Transverse colon (tissue), 4 donors: ENCODE measurements at regions of chr6 and their contacts with region 1.

Region 1: DNA sequence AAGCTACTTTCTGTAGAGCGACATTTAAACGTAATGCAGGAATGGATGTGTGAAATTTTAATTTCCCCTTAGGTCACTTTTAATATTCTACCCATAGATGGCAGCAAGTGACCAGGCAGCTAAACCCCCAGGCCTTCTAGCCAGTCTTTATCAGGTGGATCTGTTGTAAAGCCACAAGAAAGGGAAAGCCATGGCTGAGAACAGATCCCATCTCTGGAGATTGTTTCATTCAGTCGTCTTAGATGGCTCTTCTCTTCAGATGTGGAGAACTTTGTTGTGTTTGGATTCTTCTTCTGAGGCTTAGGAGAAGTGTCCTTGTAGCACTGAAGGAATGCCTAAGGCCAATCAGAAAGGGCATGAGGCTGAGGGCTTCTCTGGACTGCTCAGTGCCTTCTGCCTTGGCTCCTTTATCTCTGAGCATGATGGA is 15.8 kb upstream of the RNF182 start:
- DNase-seq: peak; percentile 36
- H3K4me3 ChIP-seq: no peak overlapping the region
- H3K27ac ChIP-seq: no peak overlapping the region
- H3K4me1 ChIP-seq: no peaks in the 10 kb centered on the region
- H3K27me3 ChIP-seq: peaks cover 37% of the 10 kb centered on the region
- CTCF ChIP-seq: peak; percentile 69 to 83 (median 75)
- EP300 ChIP-seq: no peak
- POLR2A ChIP-seq: no peak

Region 2: GRCh38 chr6:14144678-14145113 is 235.7 kb after region 1 on chr6:
- in situ Hi-C with region 1: loop called (anchors 10 to 25 kb)
- intact Hi-C with region 1: loop called (anchors 10 kb)
- DNase-seq: peak; percentile 67
- H3K4me3 ChIP-seq: no peak overlapping the region
- H3K27ac ChIP-seq: no peak overlapping the region
- H3K4me1 ChIP-seq: no peaks in the 10 kb centered on the region
- H3K27me3 ChIP-seq: no peaks in the 10 kb centered on the region
- CTCF ChIP-seq: peak; percentile 85 to 96 (median 95)
- EP300 ChIP-seq: no peak
- POLR2A ChIP-seq: no peak